Posterior vena cava (tissue), 2 donors: ENCODE measurements at regions of chr10 and their contacts with region 1.

Region 1: DNA sequence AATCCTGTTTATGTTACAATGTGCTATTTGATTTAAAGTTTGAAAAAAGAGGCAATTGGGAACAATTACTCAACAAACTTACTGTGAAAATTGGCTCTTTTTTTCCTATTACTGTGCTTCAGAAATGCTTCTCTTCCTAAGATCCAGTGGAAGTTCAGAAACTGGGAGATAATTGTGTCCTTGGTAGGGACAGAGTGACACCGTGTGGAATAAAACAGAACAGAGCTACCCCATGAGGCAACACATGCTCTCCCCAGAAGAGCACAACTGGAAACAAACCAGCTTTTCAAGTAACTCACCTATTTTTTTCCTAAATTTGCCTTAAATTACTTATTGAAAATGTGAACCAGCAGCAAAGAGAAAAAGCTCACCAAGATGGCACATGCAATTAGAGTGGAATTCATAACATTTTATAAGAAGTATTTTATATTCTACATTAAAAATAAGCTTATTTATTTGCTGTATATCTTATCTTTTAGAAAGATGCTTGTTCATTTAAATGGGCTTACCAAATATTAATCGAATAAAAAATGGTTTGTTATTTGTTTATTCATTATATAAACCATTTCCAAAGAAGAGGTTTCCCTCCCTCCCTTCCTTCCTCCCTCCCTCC is 346.1 kb upstream of the ANKRD30A start:
- DNase-seq: no peak

Region 2: GRCh38 chr10:35195361-35196306 is 1583.7 kb before region 1 on chr10:
- intact Hi-C with region 1: no loop called
- DNase-seq: peak; percentile 89

Region 3: DNA sequence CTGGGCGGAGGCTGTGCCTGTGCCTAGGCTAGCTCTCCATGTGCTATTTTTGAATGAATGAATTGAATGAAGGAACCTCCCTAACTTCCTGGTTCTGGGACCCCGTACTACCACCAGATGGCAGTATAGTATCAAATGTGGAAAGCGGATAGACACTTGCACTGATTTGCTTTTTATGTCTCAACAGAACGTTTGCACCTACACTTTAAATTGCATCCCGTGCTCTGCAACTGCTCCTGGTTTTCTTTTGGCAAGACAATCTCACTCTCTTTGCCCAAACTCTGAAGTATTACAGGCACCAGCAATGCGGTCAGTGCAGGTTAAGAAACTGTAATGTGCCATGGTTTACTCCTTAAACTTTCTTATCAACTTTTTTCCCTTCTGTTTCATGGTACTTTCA is 1143.8 kb before region 1 on chr10:
- intact Hi-C with region 1: loop called (anchors 5 kb)
- DNase-seq: no peak